ENCODE measurements at regions of chr15 and their contacts with region 1.

Region 1: DNA sequence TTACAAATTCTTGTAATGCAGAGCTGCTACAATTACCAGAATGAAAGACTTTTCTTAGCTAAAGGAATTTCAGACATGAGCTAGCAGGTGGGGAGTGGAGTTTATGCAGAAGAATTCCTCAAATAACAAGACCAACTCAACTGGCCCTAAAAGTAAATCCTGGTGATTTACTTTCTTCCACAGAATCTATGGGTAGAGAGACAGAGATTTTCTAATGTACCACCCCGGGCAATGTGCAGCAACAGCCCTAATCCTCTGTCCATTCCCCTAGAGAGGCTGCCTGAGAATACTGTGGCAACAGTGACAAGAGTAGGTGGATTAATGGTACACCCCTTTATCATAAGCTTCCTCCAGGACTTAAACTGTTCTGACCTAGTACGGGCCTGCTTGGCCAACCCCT is 55.2 kb downstream of the AQR start:
- DNase-seq: no peak
- ATAC-seq: no peak
- H3K4me3 Mint-ChIP-seq: no peak overlapping the region
- H3K27ac Mint-ChIP-seq: no peak overlapping the region
- H3K4me1 Mint-ChIP-seq: no peaks in the 10 kb centered on the region
- H3K27me3 Mint-ChIP-seq: no peaks in the 10 kb centered on the region

Region 2: GRCh38 chr15:34116625-34117024 is 797.7 kb before region 1 on chr15:
- CTCF ChIA-PET with region 1: no interaction called
- POLR2A ChIA-PET with region 1: no interaction called
- intact Hi-C with region 1: no loop called
- DNase-seq: no peak
- ATAC-seq: no peak
- H3K4me3 Mint-ChIP-seq: no peak overlapping the region
- H3K27ac Mint-ChIP-seq: no peak overlapping the region
- H3K4me1 Mint-ChIP-seq: no peaks in the 10 kb centered on the region
- H3K27me3 Mint-ChIP-seq: peaks cover 12% of the 10 kb centered on the region

Region 3: GRCh38 chr15:34621675-34622074 is 292.6 kb before region 1 on chr15:
- CTCF ChIA-PET with region 1: interaction called, 10 read pairs
- POLR2A ChIA-PET with region 1: no interaction called
- intact Hi-C with region 1: no loop called
- DNase-seq: no peak
- ATAC-seq: no peak
- H3K4me3 Mint-ChIP-seq: no peak overlapping the region
- H3K27ac Mint-ChIP-seq: no peak overlapping the region
- H3K4me1 Mint-ChIP-seq: no peaks in the 10 kb centered on the region
- H3K27me3 Mint-ChIP-seq: peaks cover 18% of the 10 kb centered on the region

Region 4: DNA sequence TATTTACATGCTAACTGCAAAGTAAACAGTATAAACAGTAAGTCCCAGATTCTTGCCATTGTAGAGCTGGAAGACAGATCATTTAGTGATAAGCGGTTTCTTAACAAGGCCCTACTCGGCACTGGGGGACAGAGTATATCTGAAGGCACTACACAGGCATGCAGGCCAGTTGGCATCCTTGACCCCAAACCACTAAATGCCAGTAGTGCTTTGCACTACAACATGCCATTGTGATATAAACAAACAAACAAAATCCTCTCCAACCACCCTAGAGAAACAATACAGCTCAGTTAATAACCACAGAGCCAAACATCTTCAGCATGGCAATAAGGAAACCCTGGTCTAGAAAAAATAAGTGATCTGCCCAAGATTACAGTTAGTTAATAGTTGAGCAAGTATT is 50.0 kb after region 1 on chr15:
- CTCF ChIA-PET with region 1: no interaction called
- POLR2A ChIA-PET with region 1: no interaction called
- intact Hi-C with region 1: no loop called
- DNase-seq: no peak
- ATAC-seq: no peak
- H3K4me3 Mint-ChIP-seq: no peak overlapping the region
- H3K27ac Mint-ChIP-seq: peak overlapping the region; percentile 4
- H3K4me1 Mint-ChIP-seq: peaks cover 36% of the 10 kb centered on the region
- H3K27me3 Mint-ChIP-seq: no peaks in the 10 kb centered on the region